ENCODE measurements at regions of chr9 and their contacts with region 1.

Region 1: GRCh38 chr9:68560071-68560844 is 19.6 kb upstream of the TMEM252 start:
- DNase-seq: peak; percentile 90 to 96 (median 90)
- H3K4me3 ChIP-seq: peak overlapping the region in 1 of 3 experiments; percentile 50
- H3K4me3 Mint-ChIP-seq: peak overlapping the region; percentile 27 to 69
- H3K27ac ChIP-seq: peak overlapping the region; percentile 92 to 96
- H3K27ac Mint-ChIP-seq: peak overlapping the region; percentile 94 to 98 (median 96)
- H3K4me1 ChIP-seq: peaks cover 100% of the 10 kb centered on the region in 2 donors
- H3K4me1 Mint-ChIP-seq: peaks cover 98% of the 10 kb centered on the region
- H3K27me3 ChIP-seq: no peaks in the 10 kb centered on the region
- H3K27me3 Mint-ChIP-seq: peaks cover 0 to 3% (median 1%) of the 10 kb centered on the region in 3 donors
- CTCF ChIP-seq: peak; percentile 67

Region 2: DNA sequence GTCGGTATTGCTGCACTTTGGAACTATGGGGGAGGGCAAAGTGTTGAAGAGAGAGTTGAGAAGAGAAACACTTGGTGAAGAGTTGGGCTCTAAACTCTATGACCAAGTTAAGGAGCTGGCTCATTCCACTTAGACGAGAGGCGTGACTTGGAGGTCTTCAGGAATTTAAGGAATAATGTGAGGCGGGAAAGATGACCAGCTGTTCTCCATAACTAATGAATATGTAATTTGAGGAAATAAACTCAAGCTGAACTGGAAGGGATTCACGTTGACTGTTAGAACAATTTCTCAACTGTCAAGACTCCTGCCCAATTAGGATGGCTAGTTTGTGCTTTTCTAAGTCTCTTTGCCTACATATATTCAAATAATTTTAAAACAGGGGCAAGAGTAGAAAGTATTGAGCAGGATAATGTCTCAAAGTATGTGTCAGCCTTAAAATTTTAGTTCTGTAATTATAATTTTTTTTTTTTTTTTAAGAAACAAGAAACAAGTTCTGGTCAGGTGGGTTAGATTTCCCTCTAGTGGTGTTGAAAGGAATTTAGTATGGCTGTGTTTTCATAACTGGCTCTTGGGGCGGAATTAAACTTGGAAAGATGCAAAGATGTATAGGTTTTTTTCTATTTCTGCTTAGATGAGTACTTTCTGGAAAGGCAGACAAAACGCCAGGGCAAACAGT is 53.0 kb before region 1 on chr9:
- intact Hi-C with region 1: loop called in 1 of 2 experiments (anchors 10 kb)
- DNase-seq: peak; percentile 21 to 37 (median 32)
- H3K4me3 ChIP-seq: no peak overlapping the region
- H3K4me3 Mint-ChIP-seq: no peak overlapping the region
- H3K27ac ChIP-seq: no peak overlapping the region
- H3K27ac Mint-ChIP-seq: peak overlapping the region in 5 of 7 donors; percentile 46 to 73 (median 64)
- H3K4me1 ChIP-seq: peaks cover 18 to 24% of the 10 kb centered on the region in 2 donors
- H3K4me1 Mint-ChIP-seq: peaks cover 24% of the 10 kb centered on the region
- H3K27me3 ChIP-seq: no peaks in the 10 kb centered on the region
- H3K27me3 Mint-ChIP-seq: no peaks in the 10 kb centered on the region
- CTCF ChIP-seq: peak; percentile 86

Region 3: DNA sequence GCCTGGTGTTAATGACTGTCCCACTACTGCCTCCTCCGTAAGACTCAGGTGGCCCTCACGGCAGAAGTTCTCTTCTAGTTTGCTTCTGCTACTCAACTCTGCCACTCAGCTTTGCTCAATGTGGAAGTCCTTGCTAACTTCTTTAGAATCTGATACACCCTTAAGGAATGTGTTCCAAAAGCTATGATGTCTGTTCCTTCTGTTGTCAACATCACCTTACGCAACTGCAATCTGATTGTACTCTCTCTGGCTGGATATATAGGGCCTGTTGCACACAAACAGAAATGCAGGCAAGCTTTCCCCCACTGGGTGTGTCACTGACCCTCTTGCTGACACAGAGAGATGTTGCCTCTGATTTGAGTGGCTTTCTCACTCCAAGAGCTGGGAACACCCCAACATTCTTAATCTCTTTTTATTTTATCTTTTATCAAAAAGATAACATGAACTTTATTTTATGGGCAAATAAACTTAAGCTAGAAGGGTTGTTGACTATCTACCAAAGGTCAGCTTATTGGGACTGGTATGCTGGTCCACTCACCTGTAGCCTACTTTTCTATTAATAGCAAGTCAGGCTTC is 44.8 kb before region 1 on chr9:
- intact Hi-C with region 1: loop called in 1 of 2 experiments (anchors 5 kb)
- DNase-seq: peak in 2 of 3 donors; percentile 12 to 30
- H3K4me3 ChIP-seq: no peak overlapping the region
- H3K4me3 Mint-ChIP-seq: no peak overlapping the region
- H3K27ac ChIP-seq: peak overlapping the region in 1 of 2 donors; percentile 47
- H3K27ac Mint-ChIP-seq: peak overlapping the region in 1 of 7 donors; percentile 88
- H3K4me1 ChIP-seq: peaks cover 9 to 13% of the 10 kb centered on the region in 2 donors
- H3K4me1 Mint-ChIP-seq: peaks cover 18% of the 10 kb centered on the region
- H3K27me3 ChIP-seq: no peaks in the 10 kb centered on the region
- H3K27me3 Mint-ChIP-seq: peaks cover 0 to 3% (median 0%) of the 10 kb centered on the region in 3 donors
- CTCF ChIP-seq: no peak

Region 4: DNA sequence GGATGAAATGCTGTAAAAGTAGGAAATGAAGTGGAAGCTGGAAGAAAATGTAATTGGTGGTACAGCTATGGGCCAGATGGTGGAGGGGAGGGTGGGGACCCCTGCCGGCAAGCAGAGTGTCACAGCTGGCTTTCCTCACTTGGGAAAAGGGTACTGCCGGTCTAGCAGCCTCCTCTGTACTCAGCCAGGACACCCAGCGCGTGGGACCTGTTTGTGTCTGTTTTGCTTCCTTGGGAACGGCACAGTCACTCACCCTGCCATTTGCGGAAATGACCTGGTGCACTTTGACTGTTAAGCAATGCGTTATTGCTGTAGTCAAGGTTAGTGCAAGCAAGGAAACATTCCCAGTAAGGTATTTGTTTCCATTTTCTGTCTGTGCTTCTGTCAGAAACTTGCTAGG is 29.6 kb before region 1 on chr9:
- intact Hi-C with region 1: no loop called
- DNase-seq: peak; percentile 23 to 50 (median 30)
- H3K4me3 ChIP-seq: no peak overlapping the region
- H3K4me3 Mint-ChIP-seq: no peak overlapping the region
- H3K27ac ChIP-seq: no peak overlapping the region
- H3K27ac Mint-ChIP-seq: peak overlapping the region in 6 of 7 donors; percentile 4 to 84 (median 70)
- H3K4me1 ChIP-seq: peaks cover 23 to 26% of the 10 kb centered on the region in 2 donors
- H3K4me1 Mint-ChIP-seq: peaks cover 44% of the 10 kb centered on the region
- H3K27me3 ChIP-seq: no peaks in the 10 kb centered on the region
- H3K27me3 Mint-ChIP-seq: peaks cover 0 to 3% (median 2%) of the 10 kb centered on the region in 3 donors
- CTCF ChIP-seq: no peak

Region 5: DNA sequence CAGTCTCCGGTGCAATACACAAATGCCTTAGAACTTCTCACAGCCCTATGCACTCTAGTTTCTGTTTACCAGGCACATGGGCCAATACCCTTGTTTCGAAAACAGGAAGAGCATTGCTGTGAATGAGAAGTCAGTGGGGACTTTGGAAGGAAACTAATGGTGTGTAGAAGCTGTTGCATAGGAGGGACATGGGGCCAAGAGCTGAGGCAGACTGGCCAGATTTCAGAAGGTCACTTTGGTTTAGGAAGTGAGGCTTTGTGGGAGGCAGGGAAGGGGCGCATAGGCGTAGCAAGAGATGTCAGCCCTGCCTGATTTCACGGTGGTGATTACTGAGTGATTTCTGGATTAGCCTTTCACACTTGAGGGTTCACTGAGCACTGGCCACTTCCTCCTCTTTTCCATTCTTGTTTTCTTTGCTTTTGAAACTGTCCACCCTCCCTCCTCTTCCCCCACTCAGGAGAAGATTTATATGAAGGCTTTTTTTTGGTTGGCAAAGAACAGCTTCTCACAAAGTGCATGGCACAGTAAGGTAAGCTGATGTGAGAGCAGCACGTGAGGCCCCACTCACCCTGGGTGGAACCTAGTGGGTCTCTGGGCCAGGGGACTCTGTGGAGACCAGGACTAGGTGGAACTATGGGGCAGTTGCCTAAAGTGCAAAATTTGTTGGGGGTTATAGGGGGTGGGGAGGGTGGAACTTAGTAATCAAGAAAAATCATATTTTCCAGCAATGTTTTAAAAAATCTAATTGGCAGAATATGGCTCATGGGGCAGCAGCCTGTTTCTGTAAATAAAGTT is 13.5 kb before region 1 on chr9:
- intact Hi-C with region 1: loop called in 1 of 2 experiments (anchors 2 kb)
- DNase-seq: peak; percentile 83 to 91 (median 90)
- H3K4me3 ChIP-seq: peak overlapping the region; percentile 23 to 64 (median 43)
- H3K4me3 Mint-ChIP-seq: peak overlapping the region; percentile 68 to 85
- H3K27ac ChIP-seq: peak overlapping the region; percentile 93 to 96
- H3K27ac Mint-ChIP-seq: peak overlapping the region; percentile 98 to 99 (median 99)
- H3K4me1 ChIP-seq: peaks cover 61 to 75% of the 10 kb centered on the region in 2 donors
- H3K4me1 Mint-ChIP-seq: peaks cover 74% of the 10 kb centered on the region
- H3K27me3 ChIP-seq: no peaks in the 10 kb centered on the region
- H3K27me3 Mint-ChIP-seq: peaks cover 0 to 1% (median 0%) of the 10 kb centered on the region in 3 donors
- CTCF ChIP-seq: no peak

Measured in CD14-positive monocyte (primary cell).